Naive thymus-derived CD4-positive, alpha-beta T cell (primary cell): ENCODE measurements at regions of chr10 and their contacts with region 1.

Region 1: DNA sequence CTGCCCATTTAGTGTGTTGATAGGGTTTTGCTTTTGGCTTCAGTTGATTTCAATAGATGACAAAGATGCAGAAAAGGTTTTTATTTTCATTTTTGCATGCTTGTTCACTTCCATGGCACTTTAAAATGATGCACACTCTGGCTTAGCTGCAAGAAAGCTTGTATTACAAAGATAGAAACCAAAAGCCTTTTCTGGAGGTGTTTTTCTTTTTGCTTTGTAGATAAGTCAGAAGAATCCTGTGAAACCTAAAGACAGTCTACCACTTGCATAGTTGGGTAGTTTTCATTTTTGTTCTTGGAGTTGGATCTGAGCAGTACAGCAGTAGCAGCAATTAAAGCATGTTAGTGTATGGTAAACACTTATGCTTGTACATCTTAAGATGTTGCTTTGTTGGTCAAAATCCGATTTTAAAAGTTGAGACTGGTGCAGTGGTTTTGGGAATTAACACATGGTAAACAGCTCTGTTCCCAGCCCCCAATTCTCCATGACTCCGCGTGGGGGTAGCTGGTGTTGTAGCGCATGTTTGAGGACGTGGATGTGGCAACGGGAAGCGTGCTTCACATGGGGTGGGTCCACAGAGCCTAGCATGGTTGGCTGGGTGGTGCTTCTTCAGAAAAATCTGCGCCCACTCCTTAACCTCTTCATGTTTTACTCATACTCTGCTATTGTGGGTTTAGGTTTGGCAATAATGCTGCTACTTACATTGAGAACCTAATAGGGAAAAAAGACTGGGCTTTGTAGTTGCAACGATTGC is 19.8 kb downstream of the CCNY start:
- DNase-seq: peak in 2 of 9 donors; percentile 13 to 40
- ATAC-seq: peak; percentile 40
- H3K4me3 ChIP-seq: no peak overlapping the region
- H3K4me3 Mint-ChIP-seq: peak overlapping the region; percentile 29 to 78 (median 58)
- H3K27ac ChIP-seq: no peak overlapping the region
- H3K27ac Mint-ChIP-seq: peak overlapping the region in 8 of 9 donors; percentile 3 to 89 (median 52)
- H3K4me1 ChIP-seq: peaks cover 20 to 31% of the 10 kb centered on the region in 2 donors
- H3K4me1 Mint-ChIP-seq: peaks cover 62 to 91% (median 88%) of the 10 kb centered on the region in 7 donors
- H3K27me3 ChIP-seq: no peaks in the 10 kb centered on the region
- H3K27me3 Mint-ChIP-seq: no peaks in the 10 kb centered on the region

Region 2: DNA sequence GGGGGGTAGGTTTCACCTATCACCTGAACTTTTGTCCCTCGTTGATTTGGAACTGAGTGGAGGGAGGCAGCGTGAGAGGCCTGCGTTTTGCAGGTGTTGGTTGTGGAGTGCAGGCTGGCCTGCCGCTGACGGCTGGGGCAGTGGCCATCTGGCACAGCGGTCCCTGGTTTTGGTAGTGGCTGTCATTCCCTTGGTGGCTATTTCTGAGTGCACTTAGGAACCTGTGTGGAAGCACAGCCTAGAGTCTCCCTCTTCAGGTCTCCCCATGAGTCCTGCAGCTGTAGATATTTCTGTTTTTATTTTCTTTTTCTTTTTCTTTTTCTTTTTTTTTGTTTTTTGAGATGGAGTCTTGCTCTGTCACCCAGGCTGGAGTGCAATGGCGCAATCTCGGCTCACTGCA is 395.2 kb before region 1 on chr10:
- CTCF ChIA-PET with region 1: no interaction called
- POLR2A ChIA-PET with region 1: no interaction called
- intact Hi-C with region 1: no loop called
- DNase-seq: no peak
- ATAC-seq: no peak
- H3K4me3 ChIP-seq: no peak overlapping the region
- H3K4me3 Mint-ChIP-seq: no peak overlapping the region
- H3K27ac ChIP-seq: no peak overlapping the region
- H3K27ac Mint-ChIP-seq: no peak overlapping the region
- H3K4me1 ChIP-seq: no peaks in the 10 kb centered on the region
- H3K4me1 Mint-ChIP-seq: no peaks in the 10 kb centered on the region
- H3K27me3 ChIP-seq: no peaks in the 10 kb centered on the region
- H3K27me3 Mint-ChIP-seq: no peaks in the 10 kb centered on the region

Region 3: GRCh38 chr10:35341521-35341920 is 14.6 kb before region 1 on chr10:
- CTCF ChIA-PET with region 1: no interaction called
- POLR2A ChIA-PET with region 1: interaction called, 5 read pairs
- intact Hi-C with region 1: loop called (anchors 1 to 2 kb)
- DNase-seq: peak in 7 of 9 donors; percentile 26 to 70 (median 60)
- ATAC-seq: peak; percentile 73
- H3K4me3 ChIP-seq: peak overlapping the region; percentile 36
- H3K4me3 Mint-ChIP-seq: peak overlapping the region in 9 of 10 donors; percentile 23 to 85 (median 69)
- H3K27ac ChIP-seq: peak overlapping the region; percentile 42
- H3K27ac Mint-ChIP-seq: peak overlapping the region; percentile 1 to 83 (median 73)
- H3K4me1 ChIP-seq: peaks cover 33 to 34% of the 10 kb centered on the region in 2 donors
- H3K4me1 Mint-ChIP-seq: peaks cover 57 to 83% (median 76%) of the 10 kb centered on the region in 7 donors
- H3K27me3 ChIP-seq: no peaks in the 10 kb centered on the region
- H3K27me3 Mint-ChIP-seq: no peaks in the 10 kb centered on the region